ENCODE measurements at regions of chr10 and their contacts with region 1.

Region 1: GRCh38 chr10:4183761-4184261 is 398.8 kb upstream of the KLF6 start:
- DNase-seq: no peak
- H3K4me3 ChIP-seq: no peak overlapping the region
- H3K27ac ChIP-seq: no peak overlapping the region
- H3K4me1 ChIP-seq: peaks cover 10% of the 10 kb centered on the region
- H3K27me3 ChIP-seq: no peaks in the 10 kb centered on the region
- CTCF ChIP-seq: no peak
- POLR2A ChIP-seq: no peak

Region 2: GRCh38 chr10:3828404-3829155 is 355.2 kb before region 1 on chr10:
- intact Hi-C with region 1: loop called (anchors 5 kb)
- DNase-seq: no peak
- H3K4me3 ChIP-seq: peak overlapping the region; percentile 44 to 55
- H3K27ac ChIP-seq: peak overlapping the region; percentile 32 to 51
- H3K4me1 ChIP-seq: peaks cover 9% of the 10 kb centered on the region
- H3K27me3 ChIP-seq: no peaks in the 10 kb centered on the region
- CTCF ChIP-seq: no peak
- POLR2A ChIP-seq: no peak